Activated CD4-positive, alpha-beta memory T cell treated with anti-CD3 and anti-CD28 coated beads for 36 hours (primary cell): ENCODE measurements at regions of chr1 and their contacts with region 1.

Region 1: DNA sequence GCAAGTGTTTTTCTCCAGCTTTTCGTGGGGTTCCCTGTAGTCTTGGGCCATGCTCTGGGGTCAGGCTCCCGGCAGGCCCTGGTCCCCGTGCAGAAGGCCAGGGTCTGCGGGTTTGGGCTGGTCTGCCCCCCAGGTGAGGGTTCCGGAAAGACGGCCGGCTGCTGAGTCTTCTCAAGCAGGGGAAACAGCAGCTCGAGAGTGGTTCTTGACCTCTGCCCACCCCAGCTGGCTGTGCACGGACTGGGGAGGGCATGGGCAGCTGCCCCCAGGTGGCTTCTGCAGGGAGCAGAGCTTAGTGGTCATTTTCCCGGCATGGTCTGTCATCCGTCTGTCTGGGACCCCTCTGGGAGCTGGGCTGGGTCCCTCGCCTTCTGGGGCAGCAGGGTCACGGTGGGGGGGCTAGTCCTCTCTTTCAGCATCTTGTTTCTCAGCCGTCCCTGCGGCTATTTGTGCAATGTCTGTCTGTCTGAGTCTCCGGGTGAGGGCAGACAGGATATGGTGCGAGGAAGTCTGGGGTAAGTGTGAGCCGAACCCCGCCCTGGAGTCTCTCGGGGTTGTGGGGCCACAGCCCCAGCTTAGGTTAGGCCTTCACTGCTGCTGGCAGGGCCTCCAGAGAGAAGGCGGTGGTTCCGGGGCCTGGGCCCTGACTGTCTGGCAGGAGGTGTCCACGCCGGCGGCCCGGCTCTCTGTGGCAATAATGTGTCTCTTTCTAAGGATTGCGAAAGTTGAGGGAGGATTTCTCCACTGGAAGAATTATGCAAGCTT is 6.1 kb downstream of the SKI start:
- DNase-seq: peak; percentile 83
- H3K4me3 Mint-ChIP-seq: peak overlapping the region; percentile 99
- H3K27ac Mint-ChIP-seq: peak overlapping the region; percentile 94
- H3K4me1 Mint-ChIP-seq: peaks cover 65% of the 10 kb centered on the region
- H3K27me3 Mint-ChIP-seq: no peaks in the 10 kb centered on the region

Region 2: GRCh38 chr1:2255420-2256369 is 21.5 kb after region 1 on chr1:
- CTCF ChIA-PET with region 1: interaction called, 5 read pairs
- POLR2A ChIA-PET with region 1: interaction called, 5 read pairs
- intact Hi-C with region 1: loop called (anchors 1 kb)
- DNase-seq: peak; percentile 89
- H3K4me3 Mint-ChIP-seq: no peak overlapping the region
- H3K27ac Mint-ChIP-seq: no peak overlapping the region
- H3K4me1 Mint-ChIP-seq: peaks cover 51% of the 10 kb centered on the region
- H3K27me3 Mint-ChIP-seq: no peaks in the 10 kb centered on the region

Region 3: GRCh38 chr1:2381741-2382620 is 147.8 kb after region 1 on chr1:
- CTCF ChIA-PET with region 1: interaction called, 18 read pairs
- POLR2A ChIA-PET with region 1: interaction called, 4 read pairs
- intact Hi-C with region 1: no loop called
- DNase-seq: peak; percentile 85
- H3K4me3 Mint-ChIP-seq: no peak overlapping the region
- H3K27ac Mint-ChIP-seq: no peak overlapping the region
- H3K4me1 Mint-ChIP-seq: no peaks in the 10 kb centered on the region
- H3K27me3 Mint-ChIP-seq: no peaks in the 10 kb centered on the region